ENCODE measurements at regions of chr12 and their contacts with region 1.

Region 1: DNA sequence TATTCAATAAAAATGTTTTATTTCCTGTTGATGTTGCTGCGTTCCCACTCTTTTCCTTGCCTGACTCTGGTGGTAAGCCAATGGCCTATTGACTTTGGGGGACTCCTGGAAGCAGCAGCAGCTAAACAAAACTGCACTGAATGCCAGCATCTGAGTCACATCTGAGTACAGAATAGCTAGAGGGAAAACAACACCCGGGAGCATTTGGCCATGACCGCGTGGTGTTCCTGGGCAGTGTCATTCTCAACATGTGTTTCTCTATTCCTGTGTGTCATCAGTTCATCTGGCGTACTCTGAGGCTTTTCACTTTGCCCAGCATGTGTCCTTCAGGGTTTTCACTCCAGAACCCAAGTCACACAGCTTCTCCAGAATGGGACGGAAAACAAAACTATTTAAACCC is 238.8 kb downstream of the PAWR start:
- DNase-seq: peak; percentile 31
- ATAC-seq: peak; percentile 79
- H3K4me3 ChIP-seq: no peak overlapping the region
- H3K27ac ChIP-seq: no peak overlapping the region
- H3K4me1 ChIP-seq: peaks cover 19% of the 10 kb centered on the region
- H3K27me3 ChIP-seq: no peaks in the 10 kb centered on the region; a peak in 1 of 5 replicates
- CTCF ChIP-seq: no peak
- EP300 ChIP-seq: peak in 1 of 2 experiments; percentile 13; a peak in 1 of 4 replicates
- POLR2A ChIP-seq: no peak
- RAD21 ChIP-seq: no peak

Region 2: GRCh38 chr12:79503281-79503680 is 51.3 kb after region 1 on chr12:
- CTCF ChIA-PET with region 1: no interaction called
- POLR2A ChIA-PET with region 1: no interaction called
- in situ Hi-C with region 1: loop called (anchors 5 kb)
- intact Hi-C with region 1: no loop called
- DNase-seq: no peak
- ATAC-seq: no peak
- H3K4me3 ChIP-seq: no peak overlapping the region
- H3K27ac ChIP-seq: no peak overlapping the region
- H3K4me1 ChIP-seq: peaks cover 11% of the 10 kb centered on the region
- H3K27me3 ChIP-seq: no peaks in the 10 kb centered on the region; a peak in 1 of 5 replicates
- CTCF ChIP-seq: no peak
- EP300 ChIP-seq: no peak
- POLR2A ChIP-seq: no peak
- RAD21 ChIP-seq: no peak

Measured in HepG2 (cell line).